CD4-positive, alpha-beta memory T cell (primary cell): ENCODE measurements at regions of chr14 and their contacts with region 1.

Region 1: DNA sequence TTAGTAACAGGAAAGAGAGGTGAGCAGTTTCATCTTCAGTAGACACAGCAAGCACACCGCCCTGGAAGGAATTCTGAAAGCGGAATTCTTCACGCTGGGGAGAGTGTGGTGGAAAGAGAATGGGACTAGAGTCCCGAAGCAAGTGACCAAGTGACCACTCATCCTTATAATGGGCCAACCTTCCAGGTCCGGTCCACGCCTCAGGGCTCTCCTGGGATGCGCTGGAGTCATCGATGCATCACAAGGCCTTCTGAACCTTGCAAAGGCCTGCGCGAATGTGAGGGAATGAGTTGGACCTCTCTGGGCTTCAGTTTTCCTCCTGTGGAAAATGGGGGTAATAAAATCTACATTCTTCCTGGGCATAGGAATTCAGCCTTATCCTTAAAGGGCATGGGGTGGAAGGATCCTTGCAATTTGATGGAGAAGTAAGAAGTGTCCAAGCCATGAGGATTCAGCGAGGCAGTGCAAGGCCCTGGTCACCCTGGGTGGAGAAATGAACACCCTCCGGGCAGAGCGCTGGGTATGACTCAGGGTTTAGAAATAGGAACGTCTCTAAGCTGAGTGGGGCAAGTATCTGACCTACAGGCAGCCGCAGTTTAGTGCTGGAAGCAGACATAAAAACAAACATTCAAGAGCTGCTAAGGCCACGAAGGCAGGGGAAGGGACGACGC is 97.7 kb downstream of the SETD3 start:
- DNase-seq: no peak
- H3K4me3 ChIP-seq: no peak overlapping the region
- H3K4me3 Mint-ChIP-seq: no peak overlapping the region
- H3K27ac ChIP-seq: no peak overlapping the region
- H3K27ac Mint-ChIP-seq: no peak overlapping the region
- H3K4me1 ChIP-seq: peaks cover 7% of the 10 kb centered on the region
- H3K4me1 Mint-ChIP-seq: peaks cover 5 to 12% (median 9%) of the 10 kb centered on the region in 4 donors
- H3K27me3 ChIP-seq: no peaks in the 10 kb centered on the region
- H3K27me3 Mint-ChIP-seq: peaks cover 25 to 26% of the 10 kb centered on the region in 2 donors

Region 2: DNA sequence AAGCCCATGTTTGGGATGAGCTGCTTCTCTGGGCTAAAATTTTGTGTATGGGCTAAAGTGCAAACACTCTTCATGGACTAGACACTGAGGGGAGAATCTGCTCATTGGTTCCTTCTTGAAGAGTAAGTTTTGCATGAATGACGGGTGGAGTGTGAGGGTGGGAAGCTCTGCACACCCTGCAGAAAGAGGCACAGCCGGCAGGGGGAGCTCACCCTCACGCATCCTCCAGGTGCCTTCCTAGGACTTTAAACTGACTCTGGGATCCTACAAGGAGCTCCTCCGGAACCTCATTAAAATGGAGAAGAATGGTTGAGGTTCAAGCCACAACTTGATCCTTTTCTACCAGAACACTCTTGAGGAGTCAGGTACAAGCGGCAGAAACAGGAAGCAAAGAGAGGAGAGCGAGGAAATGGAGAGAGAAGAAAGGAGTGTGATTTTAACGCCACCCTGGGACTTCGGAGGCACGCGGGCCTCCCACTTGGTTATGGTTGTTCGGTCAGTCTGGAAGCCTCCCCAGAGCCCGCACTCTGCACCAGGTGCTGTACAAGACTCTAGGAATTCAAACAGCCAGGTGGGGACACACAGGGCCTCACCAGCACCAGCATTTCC is 10.2 kb after region 1 on chr14:
- CTCF ChIA-PET with region 1: interaction called, 23 read pairs
- POLR2A ChIA-PET with region 1: no interaction called
- intact Hi-C with region 1: no loop called
- DNase-seq: peak in 2 of 5 donors; percentile 19 to 22
- H3K4me3 ChIP-seq: no peak overlapping the region
- H3K4me3 Mint-ChIP-seq: no peak overlapping the region
- H3K27ac ChIP-seq: no peak overlapping the region
- H3K27ac Mint-ChIP-seq: peak overlapping the region in 3 of 7 donors; percentile 22 to 30 (median 29)
- H3K4me1 ChIP-seq: peaks cover 5% of the 10 kb centered on the region
- H3K4me1 Mint-ChIP-seq: peaks cover 7 to 26% (median 15%) of the 10 kb centered on the region in 4 donors
- H3K27me3 ChIP-seq: no peaks in the 10 kb centered on the region
- H3K27me3 Mint-ChIP-seq: no peaks in the 10 kb centered on the region